Cardiac septum (tissue), 1 donor: ENCODE measurements at regions of chr18 and their contacts with region 1.

Region 1: GRCh38 chr18:6543330-6543908 is 128.7 kb upstream of the L3MBTL4 start:
- DNase-seq: no peak

Region 2: DNA sequence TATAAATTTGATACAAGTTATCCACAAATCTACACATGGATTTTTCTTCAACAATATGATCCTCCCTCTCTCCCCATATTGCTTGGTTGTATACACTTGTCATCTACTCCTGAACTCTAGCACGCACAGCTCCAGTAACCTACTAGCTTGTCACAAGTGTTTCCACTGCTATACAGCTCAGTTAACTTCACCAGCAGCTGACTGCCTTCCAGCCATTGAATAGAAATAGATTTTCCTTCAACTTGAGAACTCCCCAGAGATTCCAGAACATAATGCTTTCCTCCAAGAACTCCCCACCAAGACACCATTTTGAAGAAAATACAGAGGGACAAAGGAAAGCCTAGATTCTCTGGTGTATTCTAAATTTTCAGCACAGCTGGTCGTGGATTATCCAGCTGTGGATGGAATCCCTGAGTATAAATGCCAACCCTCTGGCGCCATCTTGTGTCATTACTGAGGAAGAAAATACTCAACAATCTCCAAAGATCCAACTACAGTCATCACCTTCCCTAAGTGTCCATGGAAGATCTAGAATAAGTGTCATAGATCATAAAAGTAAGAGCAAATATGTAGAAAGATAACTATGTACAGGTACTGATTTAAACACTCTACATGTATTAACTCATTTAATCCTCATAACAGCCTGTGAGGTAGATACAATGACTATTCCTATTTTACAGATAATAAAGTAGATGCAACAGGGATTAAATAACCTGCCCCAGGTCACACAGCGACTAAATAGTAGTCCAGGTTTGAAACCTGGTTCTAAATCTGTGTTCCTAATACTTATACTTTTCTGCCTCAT is 342.8 kb after region 1 on chr18:
- intact Hi-C with region 1: loop called (anchors 2 kb)
- DNase-seq: no peak